ENCODE measurements at regions of chr3 and their contacts with region 1.

Region 1: GRCh38 chr3:52339612-52340011 is 23.5 kb downstream of the DNAH1 start:
- DNase-seq: peak; percentile 39 to 69 (median 40)
- ATAC-seq: peak; percentile 81
- H3K4me3 ChIP-seq: no peak overlapping the region
- H3K27ac ChIP-seq: no peak overlapping the region
- H3K4me1 ChIP-seq: no peaks in the 10 kb centered on the region
- H3K27me3 ChIP-seq: no peaks in the 10 kb centered on the region
- CTCF ChIP-seq: peak; percentile 43 to 96 (median 76)
- POLR2A ChIP-seq: no peak

Region 2: GRCh38 chr3:52291508-52292181 is 48.0 kb before region 1 on chr3:
- intact Hi-C with region 1: loop called (anchors 5 kb)
- DNase-seq: peak in 3 of 4 donors; percentile 29 to 35 (median 33)
- ATAC-seq: no peak
- H3K4me3 ChIP-seq: no peak overlapping the region
- H3K27ac ChIP-seq: no peak overlapping the region
- H3K4me1 ChIP-seq: peaks cover 45% of the 10 kb centered on the region
- H3K27me3 ChIP-seq: no peaks in the 10 kb centered on the region
- CTCF ChIP-seq: peak in 6 of 7 experiments; percentile 35 to 55 (median 46)
- POLR2A ChIP-seq: no peak

Region 3: GRCh38 chr3:52372822-52373504 is 33.4 kb after region 1 on chr3:
- intact Hi-C with region 1: no loop called
- DNase-seq: no peak
- ATAC-seq: no peak
- H3K4me3 ChIP-seq: no peak overlapping the region
- H3K27ac ChIP-seq: no peak overlapping the region
- H3K4me1 ChIP-seq: no peaks in the 10 kb centered on the region
- H3K27me3 ChIP-seq: no peaks in the 10 kb centered on the region
- CTCF ChIP-seq: no peak
- POLR2A ChIP-seq: no peak